ENCODE measurements at regions of chr2 and their contacts with region 1.

Region 1: GRCh38 chr2:237639836-237640220 is 12.4 kb downstream of the LRRFIP1 start:
- DNase-seq: no peak
- H3K4me3 ChIP-seq: no peak overlapping the region
- H3K27ac ChIP-seq: no peak overlapping the region
- H3K4me1 ChIP-seq: no peaks in the 10 kb centered on the region
- H3K27me3 ChIP-seq: no peaks in the 10 kb centered on the region
- CTCF ChIP-seq: no peak

Region 2: DNA sequence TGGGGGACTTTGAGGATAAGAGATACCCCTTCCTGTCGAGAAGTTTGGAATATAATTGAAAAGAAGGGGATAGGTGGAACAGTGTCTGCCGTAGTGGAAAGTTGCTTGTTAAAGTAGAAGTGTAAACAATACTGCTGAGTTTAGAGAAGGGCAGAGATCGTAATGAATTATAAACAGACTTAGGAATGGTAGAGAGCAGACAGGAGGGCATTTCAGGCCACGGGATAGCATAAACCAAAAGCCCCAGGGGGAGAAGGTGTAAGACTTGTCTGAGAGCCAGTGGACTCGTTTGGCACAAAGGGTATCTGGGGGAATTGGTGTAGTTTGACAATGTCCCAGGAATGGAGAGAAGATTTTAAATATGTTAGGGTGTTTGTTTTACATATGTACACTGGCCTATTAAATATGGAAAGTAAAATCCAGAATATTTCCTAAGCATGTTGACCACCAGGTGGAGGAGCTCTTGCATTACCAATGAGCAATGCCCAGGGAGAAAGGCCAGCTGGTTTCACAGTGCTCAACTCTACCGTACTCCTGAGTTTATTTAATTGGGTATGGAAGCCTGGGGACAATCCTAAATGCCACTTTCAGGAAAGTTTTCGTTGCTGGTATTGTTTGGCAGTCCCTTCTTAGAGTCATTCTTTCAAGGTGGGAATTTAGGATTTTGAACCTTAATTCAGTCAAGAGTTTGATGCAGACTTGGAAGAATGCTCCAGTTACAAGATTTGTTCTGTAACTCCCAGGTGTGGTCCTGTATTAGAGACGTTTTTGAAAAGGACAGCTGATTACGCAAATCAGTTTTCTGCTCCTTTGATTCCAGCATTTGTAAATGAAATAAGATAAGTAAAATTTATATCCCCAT is 546.7 kb before region 1 on chr2:
- CTCF ChIA-PET with region 1: no interaction called
- dilution Hi-C with region 1: no loop called
- in situ Hi-C with region 1: no loop called
- intact Hi-C with region 1: no loop called
- DNase-seq: peak; percentile 48
- H3K4me3 ChIP-seq: no peak overlapping the region
- H3K27ac ChIP-seq: peak overlapping the region; percentile 24
- H3K4me1 ChIP-seq: peaks cover 50% of the 10 kb centered on the region
- H3K27me3 ChIP-seq: no peaks in the 10 kb centered on the region
- CTCF ChIP-seq: peak; percentile 68 to 73

Region 3: GRCh38 chr2:237529452-237530402 is 110.1 kb before region 1 on chr2:
- CTCF ChIA-PET with region 1: no interaction called
- dilution Hi-C with region 1: no loop called
- in situ Hi-C with region 1: no loop called
- intact Hi-C with region 1: no loop called
- DNase-seq: no peak
- H3K4me3 ChIP-seq: no peak overlapping the region
- H3K27ac ChIP-seq: no peak overlapping the region
- H3K4me1 ChIP-seq: peaks cover 9% of the 10 kb centered on the region
- H3K27me3 ChIP-seq: no peaks in the 10 kb centered on the region
- CTCF ChIP-seq: no peak

Region 4: DNA sequence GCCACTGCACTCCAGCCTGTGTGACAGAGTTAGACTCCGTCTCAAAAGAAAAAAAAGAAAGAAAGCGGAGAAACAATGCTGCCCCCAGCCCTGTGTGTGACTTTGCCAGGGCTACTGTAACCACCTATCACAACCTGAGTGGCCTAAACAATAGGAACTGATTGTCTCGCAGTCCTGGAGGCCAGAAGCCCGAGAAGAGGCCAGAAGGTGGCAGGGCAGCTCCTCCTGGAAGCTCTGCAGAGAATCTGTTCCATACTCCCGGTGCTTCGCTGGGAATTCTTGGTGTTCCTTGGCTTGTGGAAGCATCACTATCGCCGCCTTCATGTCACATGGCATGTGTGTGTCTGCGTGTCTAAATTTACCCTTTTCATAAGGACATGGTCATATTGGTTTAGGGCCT is 34.9 kb before region 1 on chr2:
- CTCF ChIA-PET with region 1: no interaction called
- dilution Hi-C with region 1: loop called (anchors 5 kb)
- in situ Hi-C with region 1: no loop called
- intact Hi-C with region 1: no loop called
- DNase-seq: no peak
- H3K4me3 ChIP-seq: no peak overlapping the region
- H3K27ac ChIP-seq: no peak overlapping the region
- H3K4me1 ChIP-seq: peaks cover 7% of the 10 kb centered on the region
- H3K27me3 ChIP-seq: no peaks in the 10 kb centered on the region
- CTCF ChIP-seq: peak; percentile 11 to 17

Measured in mammary epithelial cell (primary cell).